GM12878 (cell line): ENCODE measurements at regions of chr19 and their contacts with region 1.

Region 1: GRCh38 chr19:7852851-7853769 is 21.1 kb downstream of the PRR36 start:
- DNase-seq: no peak
- ATAC-seq: peak; percentile 99
- H3K4me3 ChIP-seq: no peak overlapping the region
- H3K27ac ChIP-seq: no peak overlapping the region
- H3K4me1 ChIP-seq: no peaks in the 10 kb centered on the region; the same call in 1 of the 2 replicates
- H3K27me3 ChIP-seq: no peaks in the 10 kb centered on the region
- CTCF ChIP-seq: peak; percentile 70 to 83 (median 72)
- EP300 ChIP-seq: no peak
- POLR2A ChIP-seq: no peak
- RAD21 ChIP-seq: peak; percentile 67

Region 2: GRCh38 chr19:7925171-7925851 is 72.2 kb after region 1 on chr19:
- CTCF ChIA-PET with region 1: interaction called, 4 read pairs
- POLR2A ChIA-PET with region 1: no interaction called
- RAD21 ChIA-PET with region 1: interaction called, 6 read pairs
- SMC1A ChIA-PET with region 1: no interaction called
- in situ Hi-C with region 1: no loop called
- intact Hi-C with region 1: loop called (anchors 1 kb)
- DNase-seq: no peak
- ATAC-seq: peak; percentile 57
- H3K4me3 ChIP-seq: no peak overlapping the region
- H3K27ac ChIP-seq: no peak overlapping the region
- H3K4me1 ChIP-seq: peaks cover 5% of the 10 kb centered on the region; the same call in 1 of the 2 replicates
- H3K27me3 ChIP-seq: no peaks in the 10 kb centered on the region
- CTCF ChIP-seq: peak; percentile 75 to 85 (median 82)
- EP300 ChIP-seq: no peak
- POLR2A ChIP-seq: no peak
- RAD21 ChIP-seq: peak; percentile 48

Region 3: GRCh38 chr19:8665468-8666213 is 812.5 kb after region 1 on chr19:
- CTCF ChIA-PET with region 1: no interaction called
- POLR2A ChIA-PET with region 1: no interaction called
- RAD21 ChIA-PET with region 1: no interaction called
- SMC1A ChIA-PET with region 1: no interaction called
- in situ Hi-C with region 1: no loop called
- intact Hi-C with region 1: no loop called
- DNase-seq: no peak
- ATAC-seq: no peak
- H3K4me3 ChIP-seq: no peak overlapping the region
- H3K27ac ChIP-seq: no peak overlapping the region
- H3K4me1 ChIP-seq: no peaks in the 10 kb centered on the region
- H3K27me3 ChIP-seq: no peaks in the 10 kb centered on the region
- CTCF ChIP-seq: no peak
- EP300 ChIP-seq: no peak
- POLR2A ChIP-seq: no peak
- RAD21 ChIP-seq: no peak